Activated CD4-positive, alpha-beta T cell treated with anti-CD3 and anti-CD28 coated beads, Interleukin-2, amount 10 ng/mL, durations not matched to agents 24 days and 14 days (primary cell): ENCODE measurements at regions of chr9 and their contacts with region 1.

Region 1: GRCh38 chr9:132486706-132487350 is 76.8 kb downstream of the CFAP77 start:
- DNase-seq: peak; percentile 80
- H3K4me3 Mint-ChIP-seq: peak overlapping the region; percentile 75
- H3K27ac Mint-ChIP-seq: peak overlapping the region; percentile 69
- H3K4me1 Mint-ChIP-seq: peaks cover 19% of the 10 kb centered on the region
- H3K27me3 Mint-ChIP-seq: peaks cover 53% of the 10 kb centered on the region

Region 2: DNA sequence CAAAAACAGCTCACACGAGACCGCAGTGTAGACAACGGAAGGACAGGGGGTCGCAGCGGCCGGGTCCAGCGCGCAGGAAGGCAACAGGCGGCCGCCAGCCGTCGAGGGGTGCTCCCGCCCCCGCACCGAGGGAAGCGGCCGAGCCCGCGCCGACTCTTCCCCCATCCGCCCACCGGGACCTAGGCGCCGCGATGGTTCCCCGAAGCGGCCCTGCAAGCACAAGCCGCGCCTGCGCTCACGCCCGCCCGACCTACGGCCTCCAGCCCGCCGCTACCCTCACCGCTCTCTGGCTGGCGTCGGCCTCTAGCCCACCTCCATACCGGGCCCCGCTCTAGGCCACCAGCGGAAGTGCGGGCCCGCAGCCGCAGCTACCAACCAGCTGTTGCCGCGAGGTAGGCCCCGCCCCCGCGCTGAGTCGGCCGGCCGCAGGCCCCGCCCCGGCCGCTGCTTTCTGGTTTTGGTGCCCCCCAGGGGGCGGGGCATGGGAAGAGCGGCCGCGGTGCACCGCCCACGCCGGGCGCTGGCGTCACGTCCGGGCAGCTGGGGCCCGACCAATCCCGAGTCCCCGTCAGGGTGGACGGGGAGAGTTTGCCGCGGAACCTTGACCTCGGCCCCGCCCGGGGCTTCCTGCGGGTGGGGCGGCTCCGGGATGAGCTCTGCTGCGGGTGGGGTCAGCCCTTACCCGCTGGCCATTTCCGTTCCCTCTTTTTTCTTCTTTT is 132.0 kb before region 1 on chr9 and contains the start of gene SETX:
- intact Hi-C with region 1: loop called (anchors 5 kb)
- DNase-seq: peak; percentile 97
- H3K4me3 Mint-ChIP-seq: peak within 1 kb of the TSS; percentile 74
- H3K27ac Mint-ChIP-seq: peak within 1 kb of the TSS; percentile 98
- H3K4me1 Mint-ChIP-seq: peaks cover 36% of the 10 kb centered on the region
- H3K27me3 Mint-ChIP-seq: peaks cover 2% of the 10 kb centered on the region
- total RNA-seq, gene SETX: 45.8 and 46.0 TPM in 2 replicates

Region 3: GRCh38 chr9:132412089-132412488 is 74.7 kb before region 1 on chr9:
- intact Hi-C with region 1: loop called (anchors 1 kb)
- DNase-seq: peak; percentile 75
- H3K4me3 Mint-ChIP-seq: peak overlapping the region; percentile 17
- H3K27ac Mint-ChIP-seq: no peak overlapping the region
- H3K4me1 Mint-ChIP-seq: peaks cover 19% of the 10 kb centered on the region
- H3K27me3 Mint-ChIP-seq: peaks cover 67% of the 10 kb centered on the region

Region 4: DNA sequence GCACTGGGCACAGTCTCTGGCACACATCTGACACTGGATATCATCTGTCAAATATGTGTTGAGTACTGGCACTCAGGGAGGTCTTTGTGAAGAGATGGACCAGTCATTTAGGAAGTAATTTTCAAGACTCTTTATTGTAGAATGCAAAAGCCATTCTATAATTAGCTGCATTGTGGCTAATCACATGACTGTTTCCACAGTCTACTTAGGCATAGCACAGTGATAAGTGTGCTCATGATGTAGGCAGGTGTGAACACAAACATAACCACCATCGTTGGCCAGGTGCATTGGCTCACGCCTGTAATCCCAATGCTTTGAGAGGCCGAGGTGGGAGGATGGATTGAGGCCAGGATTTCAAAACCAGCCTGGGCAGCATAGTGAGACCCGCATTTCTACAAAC is 14.6 kb before region 1 on chr9:
- intact Hi-C with region 1: no loop called
- DNase-seq: no peak
- H3K4me3 Mint-ChIP-seq: no peak overlapping the region
- H3K27ac Mint-ChIP-seq: no peak overlapping the region
- H3K4me1 Mint-ChIP-seq: no peaks in the 10 kb centered on the region
- H3K27me3 Mint-ChIP-seq: peaks cover 7% of the 10 kb centered on the region

Region 5: GRCh38 chr9:132543960-132544359 is 57.1 kb after region 1 on chr9:
- intact Hi-C with region 1: no loop called
- DNase-seq: no peak
- H3K4me3 Mint-ChIP-seq: no peak overlapping the region
- H3K27ac Mint-ChIP-seq: no peak overlapping the region
- H3K4me1 Mint-ChIP-seq: no peaks in the 10 kb centered on the region
- H3K27me3 Mint-ChIP-seq: peaks cover 5% of the 10 kb centered on the region